Left colon (tissue), 2 donors: ENCODE measurements at regions of chr18 and their contacts with region 1.

Region 1: GRCh38 chr18:35005963-35006577 is 35.1 kb upstream of the MAPRE2 start:
- DNase-seq: no peak
- ATAC-seq: peak; percentile 86

Region 2: DNA sequence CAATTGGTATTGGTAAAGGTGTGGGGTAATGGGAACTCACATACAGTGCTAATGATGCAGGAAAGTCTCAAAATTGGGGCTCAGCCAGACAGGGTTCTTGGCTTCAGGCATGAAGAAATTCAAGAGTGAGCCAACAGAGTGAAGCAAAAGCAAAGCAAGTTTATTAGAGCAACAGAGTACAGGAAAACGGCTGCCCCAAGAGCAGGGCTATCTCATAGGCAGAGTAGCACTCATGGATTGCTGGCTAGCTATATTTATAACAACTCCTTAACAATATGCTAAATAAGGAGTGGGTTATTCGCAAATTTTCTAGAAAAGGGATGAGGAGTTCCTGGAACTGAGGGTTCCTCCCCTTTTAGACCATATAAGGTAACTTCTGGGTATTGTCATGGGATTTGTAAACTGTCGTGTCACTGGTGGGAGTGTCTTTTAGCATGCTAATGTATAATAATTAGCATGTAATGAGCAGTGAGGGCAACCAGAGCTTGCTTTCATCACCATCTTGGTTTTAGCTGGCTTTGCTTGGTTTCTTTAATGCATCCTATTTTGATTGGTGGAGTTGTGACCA is 547.6 kb before region 1 on chr18:
- intact Hi-C with region 1: no loop called
- DNase-seq: no peak
- ATAC-seq: no peak

Region 3: DNA sequence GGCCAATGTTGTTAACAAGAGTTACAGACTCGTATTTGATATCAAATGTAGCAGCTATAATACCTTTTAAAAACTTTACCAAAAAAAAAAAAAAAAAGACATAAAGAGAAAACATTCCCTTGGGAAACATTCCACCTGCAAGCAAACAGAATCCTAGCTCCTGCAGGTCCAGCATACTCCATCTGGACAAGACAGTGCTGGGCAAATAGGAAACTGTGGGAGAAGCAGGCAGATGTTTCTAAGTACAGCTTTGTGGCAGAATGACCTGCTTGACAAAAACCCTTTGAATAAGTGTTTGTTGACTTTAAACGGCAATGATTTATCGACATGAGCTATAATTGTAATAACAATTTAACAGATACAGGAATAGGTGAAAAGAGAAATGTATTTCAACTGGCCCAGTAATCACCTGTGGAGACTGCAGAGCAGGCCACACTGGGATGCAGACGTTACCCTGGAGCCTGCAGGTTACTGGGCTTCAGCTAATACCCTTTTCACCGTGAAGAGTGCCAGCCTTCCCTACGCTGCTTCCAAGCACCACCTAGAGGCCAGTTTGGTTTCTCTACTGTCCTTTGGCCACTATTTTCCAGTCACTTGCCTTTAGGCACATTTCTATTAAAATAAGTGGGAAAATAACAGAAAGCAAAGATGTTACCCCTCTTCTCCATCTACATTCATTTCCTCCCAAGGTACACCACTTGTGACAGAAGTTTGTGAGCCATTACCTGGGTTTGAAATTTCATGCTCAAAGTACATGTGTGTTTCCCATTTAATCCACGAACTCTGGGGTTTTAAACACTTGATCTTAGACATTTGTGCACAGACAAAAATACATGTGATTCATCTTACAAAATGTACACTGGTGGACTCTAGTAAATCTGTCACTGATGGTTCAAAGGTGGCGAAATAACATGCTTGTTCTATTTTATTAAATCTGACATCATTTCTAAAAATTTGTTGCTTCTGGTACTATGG is 137.8 kb after region 1 on chr18:
- intact Hi-C with region 1: loop called in 1 of 2 experiments (anchors 2 kb)
- DNase-seq: peak in 1 of 2 donors; percentile 50
- ATAC-seq: peak; percentile 97

Region 4: GRCh38 chr18:35343936-35344735 is 338.1 kb after region 1 on chr18 and contains the start of gene ZNF24:
- intact Hi-C with region 1: loop called in 1 of 2 experiments (anchors 5 kb)
- DNase-seq: peak; percentile 95 to 98
- ATAC-seq: peak; percentile 96
- total RNA-seq, gene ZNF24: 39.3 to 43.6 TPM